ENCODE measurements at regions of chr17 and their contacts with region 1.

Region 1: GRCh38 chr17:49567871-49568694 is 7.6 kb upstream of the NXPH3 start:
- DNase-seq: peak; percentile 84 to 94
- ATAC-seq: peak; percentile 53 to 65
- H3K4me3 ChIP-seq: peak overlapping the region; percentile 62 to 73 (median 64)
- H3K27ac ChIP-seq: peak overlapping the region; percentile 88 to 95 (median 91)
- H3K4me1 ChIP-seq: peaks cover 34 to 38% of the 10 kb centered on the region in 2 donors
- H3K27me3 ChIP-seq: no peaks in the 10 kb centered on the region
- CTCF ChIP-seq: peak; percentile 88 to 99 (median 99)
- POLR2A ChIP-seq: peak; percentile 5 to 7

Region 2: DNA sequence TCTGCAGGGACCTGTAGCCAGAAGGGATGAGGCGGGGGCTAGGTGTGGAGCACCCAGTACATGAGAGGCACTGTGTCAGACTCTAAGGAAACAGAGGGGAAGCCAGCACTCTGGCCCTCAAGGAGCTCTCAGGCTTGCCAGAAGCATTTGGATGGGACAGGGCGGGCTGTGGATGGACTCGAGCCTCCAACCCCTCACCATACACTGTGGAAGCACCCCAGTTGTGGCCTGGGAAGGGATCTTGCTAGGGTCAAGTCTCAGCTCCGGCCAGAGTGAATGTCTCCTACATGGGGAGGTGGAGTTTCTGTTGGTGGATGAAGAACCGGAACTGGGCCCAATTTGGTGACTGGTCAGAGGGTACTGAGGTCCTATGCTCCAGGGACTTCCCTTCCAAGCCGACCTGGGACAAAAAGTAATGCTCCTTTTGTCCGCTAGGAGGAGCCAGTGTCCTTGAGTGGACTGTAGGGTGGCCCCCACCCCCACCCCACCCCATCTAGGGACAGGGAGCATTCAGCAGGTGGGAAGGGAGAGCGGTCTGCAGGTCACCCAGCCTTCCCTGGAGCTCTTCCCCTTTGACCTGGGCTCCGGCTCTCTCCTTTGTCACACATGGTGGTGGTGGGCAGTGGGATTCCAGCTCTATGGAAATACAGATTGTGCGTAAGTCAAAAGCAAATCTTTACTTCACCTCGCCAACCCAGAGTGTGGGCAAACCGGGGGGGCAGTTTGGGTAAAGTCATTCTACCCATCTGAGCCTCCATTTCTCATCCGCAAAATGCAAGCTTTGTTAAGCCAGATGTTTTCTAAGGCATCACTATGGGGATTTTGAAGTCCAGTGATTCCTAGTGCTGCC is 133.0 kb before region 1 on chr17:
- in situ Hi-C with region 1: loop called in 1 of 4 experiments (anchors 10 kb)
- intact Hi-C with region 1: no loop called
- DNase-seq: peak in 1 of 2 donors; percentile 31
- ATAC-seq: peak; percentile 68 to 78
- H3K4me3 ChIP-seq: no peak overlapping the region
- H3K27ac ChIP-seq: no peak overlapping the region
- H3K4me1 ChIP-seq: no peaks in the 10 kb centered on the region
- H3K27me3 ChIP-seq: peaks cover 4 to 12% (median 10%) of the 10 kb centered on the region in 3 donors
- CTCF ChIP-seq: peak in 4 of 5 experiments; percentile 63 to 79 (median 68)
- POLR2A ChIP-seq: no peak

Region 3: GRCh38 chr17:49677933-49678847 is 110.1 kb after region 1 on chr17 and contains the start of gene SPOP:
- in situ Hi-C with region 1: no loop called
- intact Hi-C with region 1: loop called (anchors 5 kb)
- DNase-seq: peak; percentile 99 to 100
- ATAC-seq: peak; percentile 88 to 91
- H3K4me3 ChIP-seq: peak within 1 kb of the TSS; percentile 70 to 91 (median 76)
- H3K27ac ChIP-seq: peak within 1 kb of the TSS; percentile 97 to 100 (median 100)
- H3K4me1 ChIP-seq: peaks cover 33 to 40% of the 10 kb centered on the region in 2 donors
- H3K27me3 ChIP-seq: no peaks in the 10 kb centered on the region
- CTCF ChIP-seq: no peak
- POLR2A ChIP-seq: peak in 1 of 2 donors; percentile 5
- total RNA-seq, gene SPOP: 27.5 to 57.5 (median 53.5) TPM

Region 4: DNA sequence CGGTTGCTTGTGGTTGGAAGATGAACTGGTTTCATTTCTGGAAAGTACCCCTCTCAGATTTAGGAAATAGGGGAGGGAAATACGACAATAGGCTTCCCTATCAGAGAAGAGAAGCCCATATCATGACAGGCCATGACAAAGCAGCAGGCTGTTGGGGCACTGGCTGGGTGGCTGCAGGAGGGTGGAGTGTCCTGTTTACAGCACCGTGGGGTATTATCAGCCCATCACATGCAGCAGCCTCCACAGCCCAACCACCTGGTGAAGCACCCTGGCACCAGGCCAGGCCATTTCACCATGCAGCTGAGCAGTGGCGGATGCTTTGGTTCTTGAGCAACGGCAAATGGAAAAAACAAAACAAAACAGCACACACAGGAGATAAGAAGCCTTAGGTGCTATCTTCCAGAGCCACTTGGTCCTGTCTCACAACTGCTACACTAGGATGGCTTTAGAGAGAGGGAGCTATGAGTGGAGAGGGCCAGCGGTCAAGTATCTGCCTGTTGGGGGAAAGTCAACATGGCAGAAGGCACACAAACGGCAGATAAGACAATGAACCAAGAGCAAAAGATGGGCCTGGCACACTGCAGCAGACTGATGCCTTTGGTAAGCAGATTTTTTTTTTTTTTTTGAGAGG is 171.7 kb after region 1 on chr17:
- in situ Hi-C with region 1: no loop called
- intact Hi-C with region 1: no loop called
- DNase-seq: peak; percentile 81 to 89
- ATAC-seq: peak; percentile 72 to 81
- H3K4me3 ChIP-seq: no peak overlapping the region
- H3K27ac ChIP-seq: peak overlapping the region; percentile 27 to 72 (median 50)
- H3K4me1 ChIP-seq: peaks cover 32 to 48% of the 10 kb centered on the region in 2 donors
- H3K27me3 ChIP-seq: no peaks in the 10 kb centered on the region
- CTCF ChIP-seq: no peak
- POLR2A ChIP-seq: peak in 1 of 2 donors; percentile 12

Region 5: DNA sequence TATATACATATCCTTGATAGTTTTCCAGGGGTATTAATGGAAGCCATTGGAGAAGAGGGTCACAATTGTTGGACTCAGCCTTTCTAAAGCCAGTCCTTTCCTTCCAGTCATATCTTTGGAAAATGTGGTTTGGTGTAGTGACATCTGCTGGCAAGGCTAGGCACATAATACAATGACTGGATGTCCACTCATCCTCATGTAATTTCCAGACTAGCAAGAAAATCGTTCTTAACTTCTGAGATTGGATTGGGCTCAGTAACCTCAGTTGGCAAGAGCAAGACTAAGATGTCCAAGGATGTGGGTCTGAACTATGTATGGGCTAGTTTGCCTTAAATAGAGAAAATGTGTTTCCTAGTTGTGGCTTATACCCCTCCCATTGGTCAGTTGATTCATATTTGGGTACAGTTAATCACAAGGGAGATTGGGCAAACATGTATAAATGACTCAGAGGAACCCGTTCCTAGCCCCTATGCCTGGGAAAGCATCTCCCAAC is 211.7 kb after region 1 on chr17:
- in situ Hi-C with region 1: loop called in 2 of 4 experiments (anchors 5 to 10 kb)
- intact Hi-C with region 1: no loop called
- DNase-seq: no peak
- ATAC-seq: peak; percentile 68 to 73
- H3K4me3 ChIP-seq: no peak overlapping the region
- H3K27ac ChIP-seq: no peak overlapping the region
- H3K4me1 ChIP-seq: peaks cover 11 to 13% of the 10 kb centered on the region in 2 donors
- H3K27me3 ChIP-seq: no peaks in the 10 kb centered on the region
- CTCF ChIP-seq: peak in 4 of 5 experiments; percentile 35 to 49 (median 44)
- POLR2A ChIP-seq: no peak

Region 6: DNA sequence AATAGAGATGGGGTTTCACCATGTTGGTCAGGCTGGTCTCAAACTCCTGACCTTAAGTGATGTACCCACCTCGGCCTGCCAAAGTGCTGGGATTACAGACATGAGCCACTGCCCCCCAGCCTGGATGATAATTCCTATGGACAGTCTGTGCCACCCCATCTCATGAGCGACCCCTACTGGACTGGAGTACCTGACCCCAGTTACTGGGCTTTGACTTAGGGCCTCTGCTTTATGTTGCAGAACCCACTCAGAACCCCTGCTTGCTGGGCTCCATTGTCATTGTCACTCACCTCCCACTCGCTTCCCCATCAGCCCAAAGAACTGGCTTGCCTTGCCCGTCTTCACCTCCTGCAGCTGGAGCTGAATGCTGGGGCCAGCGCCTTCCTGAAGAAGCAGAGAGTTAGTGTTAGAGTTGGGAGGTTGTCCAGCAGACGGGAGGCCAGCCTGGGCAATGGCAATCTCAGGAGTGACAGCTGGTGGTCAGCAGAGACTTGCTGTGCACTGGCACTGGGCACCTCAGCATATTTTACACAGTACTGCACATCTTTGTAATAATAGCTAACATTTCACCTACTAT is 275.8 kb after region 1 on chr17:
- in situ Hi-C with region 1: loop called in 3 of 4 experiments (anchors 5 to 10 kb)
- intact Hi-C with region 1: no loop called
- DNase-seq: no peak
- ATAC-seq: no peak
- H3K4me3 ChIP-seq: no peak overlapping the region
- H3K27ac ChIP-seq: no peak overlapping the region
- H3K4me1 ChIP-seq: peaks cover 19 to 21% of the 10 kb centered on the region in 2 donors
- H3K27me3 ChIP-seq: no peaks in the 10 kb centered on the region
- CTCF ChIP-seq: peak in 1 of 5 experiments; percentile 27
- POLR2A ChIP-seq: no peak

Region 7: DNA sequence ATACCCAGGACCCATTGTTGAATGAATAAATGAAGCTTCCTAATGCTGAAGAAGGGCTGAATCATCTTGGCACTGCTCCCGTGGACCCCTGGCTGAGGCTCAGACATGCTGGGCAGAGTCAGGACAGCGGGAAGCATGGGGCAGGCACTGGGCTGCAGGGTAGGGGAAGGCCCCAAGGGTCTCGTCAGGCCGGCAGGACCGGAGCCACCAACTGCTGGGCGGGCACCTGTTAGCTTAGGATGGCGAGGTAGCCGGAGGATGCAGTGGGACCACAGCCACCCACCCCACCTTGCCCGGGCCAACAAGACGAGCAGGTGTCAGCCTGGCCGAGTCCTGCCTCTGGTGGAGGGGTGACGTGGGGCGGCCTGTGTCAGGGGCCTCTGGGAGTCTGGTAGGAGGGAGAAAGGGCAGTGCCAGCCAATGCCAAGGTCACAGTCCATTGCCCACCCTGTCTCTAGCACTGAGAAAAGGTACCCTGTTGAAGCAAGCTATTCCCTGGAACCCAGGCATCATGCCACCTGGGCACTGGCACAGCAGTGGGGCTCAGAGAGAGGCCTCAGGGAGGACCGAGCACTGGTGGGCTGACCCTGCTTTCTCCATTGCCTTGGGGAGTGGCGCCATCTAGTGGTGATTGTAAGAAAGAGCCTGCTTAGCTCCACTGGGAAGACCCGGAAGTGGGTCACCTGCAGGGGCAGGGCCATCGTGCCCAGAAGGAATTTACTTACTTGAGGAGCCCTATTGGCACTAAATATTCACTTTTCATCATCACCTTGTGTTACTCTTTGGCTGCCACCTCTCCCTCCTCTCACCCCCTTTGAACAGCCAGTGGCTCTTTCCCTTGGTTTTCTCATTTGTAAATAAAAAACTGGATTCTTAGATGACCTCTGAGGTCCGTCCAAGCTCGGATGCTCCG is 430.0 kb after region 1 on chr17:
- in situ Hi-C with region 1: loop called (anchors 10 to 25 kb)
- intact Hi-C with region 1: loop called (anchors 2 kb)
- DNase-seq: peak; percentile 44 to 63
- ATAC-seq: peak; percentile 70 to 87
- H3K4me3 ChIP-seq: no peak overlapping the region
- H3K27ac ChIP-seq: no peak overlapping the region
- H3K4me1 ChIP-seq: peaks cover 5 to 19% of the 10 kb centered on the region in 2 donors
- H3K27me3 ChIP-seq: peaks cover 61 to 78% (median 64%) of the 10 kb centered on the region in 3 donors
- CTCF ChIP-seq: peak; percentile 85 to 96 (median 92)
- POLR2A ChIP-seq: no peak

Measured in gastrocnemius medialis (tissue), 4 donors.